Activated B cell treated with CpG ODN at 0.5 μM for 24 hours (primary cell): ENCODE measurements at regions of chr4 and their contacts with region 1.

Region 1: DNA sequence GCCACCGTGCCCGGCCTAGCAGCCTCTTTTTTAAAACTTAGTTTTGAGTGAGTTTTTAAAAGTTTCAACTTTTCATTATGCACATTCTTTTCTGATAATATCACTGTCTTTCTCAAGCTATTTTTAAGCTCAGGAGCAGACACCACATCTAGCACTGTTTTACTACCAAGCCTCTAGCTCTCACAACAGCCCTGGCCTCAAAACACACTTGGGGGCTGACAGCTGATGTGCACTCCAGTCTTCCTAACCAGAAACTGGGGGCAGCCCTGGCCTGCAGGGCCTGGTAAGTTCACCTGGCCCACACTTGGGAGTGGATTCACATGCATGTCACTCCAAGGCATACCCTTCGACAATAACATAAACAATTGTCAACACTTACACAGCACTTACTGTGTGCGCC is 34.0 kb downstream of the CENPU start:
- DNase-seq: no peak
- ATAC-seq: no peak
- H3K4me3 Mint-ChIP-seq: no peak overlapping the region
- H3K27ac Mint-ChIP-seq: no peak overlapping the region
- H3K4me1 Mint-ChIP-seq: no peaks in the 10 kb centered on the region
- H3K27me3 Mint-ChIP-seq: no peaks in the 10 kb centered on the region
- CTCF ChIP-seq: no peak

Region 2: GRCh38 chr4:183610033-183610432 is 1089.9 kb before region 1 on chr4:
- CTCF ChIA-PET with region 1: no interaction called
- POLR2A ChIA-PET with region 1: no interaction called
- intact Hi-C with region 1: no loop called
- DNase-seq: no peak
- ATAC-seq: no peak
- H3K4me3 Mint-ChIP-seq: no peak overlapping the region
- H3K27ac Mint-ChIP-seq: no peak overlapping the region
- H3K4me1 Mint-ChIP-seq: no peaks in the 10 kb centered on the region
- H3K27me3 Mint-ChIP-seq: peaks cover 11% of the 10 kb centered on the region
- CTCF ChIP-seq: no peak

Region 3: DNA sequence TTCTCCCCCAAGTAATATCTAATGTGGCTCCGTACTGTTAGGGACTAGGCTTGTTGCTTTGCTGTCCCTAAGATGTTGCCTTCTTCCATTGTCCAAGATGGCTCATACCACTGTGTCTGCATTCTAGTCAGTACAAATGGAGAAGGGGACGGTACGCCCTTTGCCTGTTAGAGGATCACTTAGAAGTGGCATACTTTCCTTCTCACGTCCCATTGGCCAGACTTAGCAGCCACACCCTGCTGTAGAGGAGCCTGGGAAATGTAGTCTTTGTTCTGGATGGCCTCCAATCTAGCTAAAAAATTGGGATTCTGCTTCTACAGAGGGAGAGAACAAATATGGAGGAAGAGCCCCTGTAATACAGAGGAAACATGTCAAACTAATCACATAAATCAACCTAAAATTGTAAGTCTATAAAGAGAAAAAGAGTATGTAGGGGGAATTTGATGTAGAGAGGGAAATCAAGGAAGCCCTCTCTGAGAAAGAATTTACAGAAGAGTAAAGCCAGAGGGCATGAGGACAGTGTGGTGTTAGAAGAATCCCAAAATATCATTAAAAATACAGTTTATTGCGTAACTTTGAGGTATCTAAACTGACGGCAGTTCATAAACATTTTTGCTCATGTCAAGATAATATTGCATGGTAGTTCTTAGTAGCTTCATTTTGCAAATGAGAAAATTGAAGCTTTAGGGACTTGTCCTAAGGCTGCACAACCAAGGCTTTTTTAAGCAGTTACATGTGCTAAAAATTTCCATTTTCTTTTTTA is 35.3 kb before region 1 on chr4:
- CTCF ChIA-PET with region 1: no interaction called
- POLR2A ChIA-PET with region 1: no interaction called
- intact Hi-C with region 1: loop called (anchors 5 kb)
- DNase-seq: no peak
- ATAC-seq: no peak
- H3K4me3 Mint-ChIP-seq: no peak overlapping the region
- H3K27ac Mint-ChIP-seq: no peak overlapping the region
- H3K4me1 Mint-ChIP-seq: peaks cover 11% of the 10 kb centered on the region
- H3K27me3 Mint-ChIP-seq: no peaks in the 10 kb centered on the region
- CTCF ChIP-seq: no peak

Region 4: DNA sequence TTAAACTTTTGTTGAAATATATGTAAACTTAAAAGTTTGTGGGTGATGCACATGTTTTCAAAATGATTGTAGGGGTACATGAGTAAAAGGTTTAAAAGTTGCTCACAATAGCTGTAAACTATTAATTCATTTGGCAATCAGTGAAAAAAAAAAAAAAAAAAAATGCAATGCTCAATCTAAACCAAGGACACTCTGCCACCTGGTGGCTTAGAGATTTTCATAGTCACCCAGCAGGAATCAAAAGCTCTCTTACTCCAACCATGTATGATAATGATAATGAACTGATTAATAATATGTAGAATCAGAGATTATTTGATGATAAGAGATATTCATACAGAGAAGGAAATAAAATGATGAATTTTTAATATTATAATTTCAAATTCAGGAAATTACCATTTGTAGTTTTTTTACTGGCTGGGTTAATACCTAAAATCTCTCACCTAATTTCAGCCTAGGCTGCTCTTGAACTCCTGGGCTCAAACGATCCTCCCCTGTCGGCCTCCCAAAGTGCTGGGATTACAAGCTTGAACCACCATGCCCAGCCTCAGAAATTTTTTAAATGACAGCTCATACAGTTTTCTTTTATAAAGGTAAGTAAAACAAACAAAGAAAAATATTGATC is 396.2 kb after region 1 on chr4:
- CTCF ChIA-PET with region 1: no interaction called
- POLR2A ChIA-PET with region 1: no interaction called
- intact Hi-C with region 1: no loop called
- DNase-seq: no peak
- ATAC-seq: no peak
- H3K4me3 Mint-ChIP-seq: no peak overlapping the region
- H3K27ac Mint-ChIP-seq: no peak overlapping the region
- H3K4me1 Mint-ChIP-seq: no peaks in the 10 kb centered on the region
- H3K27me3 Mint-ChIP-seq: peaks cover 18% of the 10 kb centered on the region
- CTCF ChIP-seq: no peak